ENCODE measurements at regions of chr10 and their contacts with region 1.

Region 1: DNA sequence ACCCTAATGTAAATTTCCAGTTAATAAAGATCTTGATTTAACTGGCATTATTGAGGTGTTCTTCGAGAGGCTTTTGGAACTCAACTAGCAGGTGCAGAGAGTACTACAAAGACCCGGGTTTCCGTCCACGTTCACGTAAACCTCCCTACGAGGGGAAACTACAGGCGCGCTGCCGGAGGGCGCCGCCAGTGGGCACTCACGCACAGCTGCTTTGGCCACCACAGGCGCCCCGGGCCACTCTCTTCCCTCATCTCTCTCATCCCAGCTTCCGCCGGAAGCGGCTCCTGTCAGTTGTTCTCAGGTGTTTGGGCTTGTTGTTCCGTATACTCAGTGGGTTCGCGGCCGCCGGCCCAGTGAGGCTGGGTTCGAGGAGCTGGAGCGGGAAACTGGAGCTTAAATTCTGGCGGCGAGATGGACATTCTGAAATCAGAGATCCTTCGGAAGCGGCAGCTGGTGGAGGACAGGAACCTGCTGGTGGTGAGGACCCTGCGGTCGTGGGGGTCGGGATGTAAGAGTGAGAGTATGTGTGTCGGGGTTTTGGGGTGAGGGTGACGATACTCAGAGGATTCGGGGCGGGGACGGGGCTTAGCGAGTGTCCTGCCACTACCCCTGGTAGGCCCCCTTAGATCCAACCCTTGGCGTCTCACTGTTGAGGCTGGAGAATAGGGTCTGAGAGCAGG is at the start of gene PRPF18:
- DNase-seq: peak; percentile 97
- H3K4me3 ChIP-seq: peak within 1 kb of the TSS; percentile 76 to 86 (median 78)
- H3K27ac ChIP-seq: peak within 1 kb of the TSS; percentile 60 to 77 (median 68)
- H3K4me1 ChIP-seq: peaks cover 16 to 25% (median 20%) of the 10 kb centered on the region in 4 donors
- H3K27me3 ChIP-seq: peaks cover 0 to 23% (median 0%) of the 10 kb centered on the region in 4 donors
- CTCF ChIP-seq: peak in 2 of 3 experiments; percentile 97 to 99
- EP300 ChIP-seq: no peak
- POLR2A ChIP-seq: no peak
- total RNA-seq, gene PRPF18: 16.2 to 27.8 (median 25.6) TPM

Region 2: GRCh38 chr10:13528875-13529713 is 57.7 kb before region 1 on chr10 and contains the start of gene BEND7:
- intact Hi-C with region 1: loop called (anchors 5 kb)
- DNase-seq: no peak
- H3K4me3 ChIP-seq: peak within 1 kb of the TSS; percentile 68 to 81 (median 74)
- H3K27ac ChIP-seq: peak within 1 kb of the TSS; percentile 84 to 88 (median 86)
- H3K4me1 ChIP-seq: peaks cover 12 to 36% (median 30%) of the 10 kb centered on the region in 4 donors
- H3K27me3 ChIP-seq: no peaks in the 10 kb centered on the region
- CTCF ChIP-seq: no peak
- EP300 ChIP-seq: no peak
- POLR2A ChIP-seq: no peak
- total RNA-seq, gene BEND7: 14.7 to 27.4 (median 20.1) TPM

Measured in esophagus muscularis mucosa (tissue), 4 donors.